CD8-positive, alpha-beta T cell (primary cell): ENCODE measurements at regions of chr18 and their contacts with region 1.

Region 1: DNA sequence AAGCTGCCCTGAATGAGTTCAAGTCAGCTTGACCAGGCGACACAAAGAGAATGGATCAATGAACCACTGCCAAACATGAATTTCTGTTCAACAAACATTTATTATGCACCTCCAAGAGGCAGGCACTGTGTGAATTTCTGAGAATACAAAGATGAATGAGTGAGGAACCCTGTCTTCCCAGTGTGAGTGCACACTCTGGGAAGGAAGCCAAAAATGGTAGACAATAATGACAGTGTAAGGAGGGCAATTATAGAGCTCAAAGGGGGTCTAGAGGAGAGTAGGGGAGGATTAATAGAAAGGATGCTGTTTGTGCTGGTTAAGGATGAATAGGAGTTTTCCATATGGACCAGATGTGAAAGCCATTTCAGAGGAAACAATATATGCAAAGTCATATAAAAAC is 213.4 kb downstream of the DCC start:
- DNase-seq: no peak
- ATAC-seq: no peak
- H3K4me3 ChIP-seq: no peak overlapping the region
- H3K4me3 Mint-ChIP-seq: no peak overlapping the region
- H3K27ac ChIP-seq: no peak overlapping the region
- H3K27ac Mint-ChIP-seq: no peak overlapping the region
- H3K4me1 ChIP-seq: no peaks in the 10 kb centered on the region
- H3K4me1 Mint-ChIP-seq: no peaks in the 10 kb centered on the region
- H3K27me3 ChIP-seq: no peaks in the 10 kb centered on the region
- H3K27me3 Mint-ChIP-seq: no peaks in the 10 kb centered on the region
- CTCF ChIP-seq: no peak

Region 2: DNA sequence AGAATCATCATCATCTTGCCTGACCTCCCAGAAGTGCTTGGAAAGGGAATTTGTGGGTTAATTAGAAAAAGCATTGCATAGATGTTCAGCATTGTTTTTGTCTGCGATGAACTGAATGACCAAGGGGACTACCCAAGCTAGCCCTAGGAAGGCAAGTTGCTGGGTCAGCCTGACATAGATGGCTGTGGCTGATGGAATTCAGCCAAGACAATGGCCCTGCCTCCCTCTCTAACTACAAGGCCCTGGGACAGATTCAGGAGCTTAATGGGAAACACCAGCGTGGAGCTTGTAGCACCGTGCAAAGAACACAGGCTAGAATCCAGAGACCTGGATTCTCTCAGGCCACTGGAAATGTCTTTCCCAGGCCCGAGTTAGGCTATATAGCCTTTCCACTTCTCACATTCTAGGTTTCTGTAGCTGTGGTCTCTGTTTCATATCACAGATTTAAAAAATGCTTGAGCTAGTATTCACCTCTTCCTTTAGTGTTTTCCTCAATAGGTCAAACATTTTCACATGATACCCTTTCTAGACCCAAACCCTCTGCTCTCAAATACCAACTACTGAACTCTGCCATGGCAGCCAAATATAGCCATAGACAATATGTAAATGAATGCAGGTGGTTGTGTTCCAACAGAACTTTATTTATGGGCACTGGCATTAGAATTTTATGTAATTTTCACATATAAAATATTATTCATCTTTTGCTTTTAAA is 1061.6 kb before region 1 on chr18:
- CTCF ChIA-PET with region 1: no interaction called
- POLR2A ChIA-PET with region 1: no interaction called
- intact Hi-C with region 1: no loop called
- DNase-seq: no peak
- ATAC-seq: no peak
- H3K4me3 ChIP-seq: no peak overlapping the region
- H3K4me3 Mint-ChIP-seq: no peak overlapping the region
- H3K27ac ChIP-seq: no peak overlapping the region
- H3K27ac Mint-ChIP-seq: no peak overlapping the region
- H3K4me1 ChIP-seq: no peaks in the 10 kb centered on the region
- H3K4me1 Mint-ChIP-seq: no peaks in the 10 kb centered on the region
- H3K27me3 ChIP-seq: no peaks in the 10 kb centered on the region
- H3K27me3 Mint-ChIP-seq: peaks cover 3% of the 10 kb centered on the region
- CTCF ChIP-seq: no peak

Region 3: GRCh38 chr18:52567360-52567759 is 13.9 kb after region 1 on chr18:
- CTCF ChIA-PET with region 1: no interaction called
- POLR2A ChIA-PET with region 1: no interaction called
- intact Hi-C with region 1: loop called in 1 of 2 experiments (anchors 1 kb)
- DNase-seq: no peak
- ATAC-seq: no peak
- H3K4me3 ChIP-seq: no peak overlapping the region
- H3K4me3 Mint-ChIP-seq: no peak overlapping the region
- H3K27ac ChIP-seq: no peak overlapping the region
- H3K27ac Mint-ChIP-seq: no peak overlapping the region
- H3K4me1 ChIP-seq: no peaks in the 10 kb centered on the region
- H3K4me1 Mint-ChIP-seq: no peaks in the 10 kb centered on the region
- H3K27me3 ChIP-seq: no peaks in the 10 kb centered on the region
- H3K27me3 Mint-ChIP-seq: no peaks in the 10 kb centered on the region
- CTCF ChIP-seq: no peak

Region 4: GRCh38 chr18:52620926-52621439 is 67.5 kb after region 1 on chr18:
- CTCF ChIA-PET with region 1: no interaction called
- POLR2A ChIA-PET with region 1: no interaction called
- intact Hi-C with region 1: no loop called
- DNase-seq: no peak
- ATAC-seq: no peak
- H3K4me3 ChIP-seq: no peak overlapping the region
- H3K4me3 Mint-ChIP-seq: no peak overlapping the region
- H3K27ac ChIP-seq: no peak overlapping the region
- H3K27ac Mint-ChIP-seq: no peak overlapping the region
- H3K4me1 ChIP-seq: no peaks in the 10 kb centered on the region
- H3K4me1 Mint-ChIP-seq: no peaks in the 10 kb centered on the region
- H3K27me3 ChIP-seq: no peaks in the 10 kb centered on the region
- H3K27me3 Mint-ChIP-seq: no peaks in the 10 kb centered on the region
- CTCF ChIP-seq: no peak